PC-3 (cell line): ENCODE measurements at regions of chr17 and their contacts with region 1.

Region 1: GRCh38 chr17:56699186-56699895 is 105.8 kb downstream of the NOG start:
- DNase-seq: peak; percentile 100
- ATAC-seq: peak; percentile 95
- H3K4me3 ChIP-seq: peak overlapping the region; percentile 46; the same call in 1 of the 2 replicates
- H3K27ac ChIP-seq: peak overlapping the region; percentile 90
- H3K4me1 ChIP-seq: peaks cover 23% of the 10 kb centered on the region
- H3K27me3 ChIP-seq: no peaks in the 10 kb centered on the region
- CTCF ChIP-seq: no peak

Region 2: GRCh38 chr17:56558088-56558487 is 141.3 kb before region 1 on chr17:
- CTCF ChIA-PET with region 1: no interaction called
- POLR2A ChIA-PET with region 1: no interaction called
- intact Hi-C with region 1: no loop called
- DNase-seq: no peak
- ATAC-seq: no peak
- H3K4me3 ChIP-seq: no peak overlapping the region
- H3K27ac ChIP-seq: no peak overlapping the region
- H3K4me1 ChIP-seq: no peaks in the 10 kb centered on the region
- H3K27me3 ChIP-seq: peaks cover 48% of the 10 kb centered on the region
- CTCF ChIP-seq: no peak

Region 3: GRCh38 chr17:56653877-56654276 is 45.5 kb before region 1 on chr17:
- CTCF ChIA-PET with region 1: interaction called, 7 read pairs
- POLR2A ChIA-PET with region 1: interaction called, 3 read pairs
- intact Hi-C with region 1: loop called (anchors 1 kb)
- DNase-seq: peak; percentile 91
- ATAC-seq: peak; percentile 87
- H3K4me3 ChIP-seq: no peak overlapping the region
- H3K27ac ChIP-seq: no peak overlapping the region
- H3K4me1 ChIP-seq: peaks cover 14% of the 10 kb centered on the region
- H3K27me3 ChIP-seq: no peaks in the 10 kb centered on the region
- CTCF ChIP-seq: peak; percentile 91

Region 4: DNA sequence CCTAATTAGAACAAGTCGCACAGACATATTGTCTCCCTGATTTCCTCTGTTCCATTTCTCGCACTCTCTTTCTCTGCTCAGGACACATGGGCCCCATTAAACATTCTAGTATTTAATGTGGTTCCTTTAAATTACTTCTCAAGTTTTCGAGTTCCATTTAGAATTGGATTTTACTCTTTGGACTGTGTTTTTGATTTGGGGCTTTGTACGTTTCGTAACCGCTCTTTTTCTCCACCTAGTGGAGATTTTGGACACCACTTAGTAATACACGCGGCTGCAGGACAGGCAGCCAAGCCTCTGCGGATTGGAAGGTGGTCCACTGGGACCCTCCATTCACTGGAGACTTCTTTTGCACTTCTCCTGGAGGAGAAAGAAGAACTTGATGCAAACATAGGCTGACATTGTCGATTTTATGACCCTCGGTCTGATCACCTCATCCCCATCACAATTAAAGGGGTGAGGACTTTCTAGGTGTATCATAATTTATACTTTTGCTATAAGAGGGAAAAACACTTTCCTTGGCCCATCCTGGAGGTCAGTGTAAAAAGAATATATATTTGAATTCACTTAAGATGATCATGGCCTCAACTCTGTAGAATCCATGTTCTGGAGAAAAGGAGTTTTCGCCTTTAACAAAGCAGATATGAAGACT is 20.1 kb before region 1 on chr17:
- CTCF ChIA-PET with region 1: interaction called, 6 read pairs
- POLR2A ChIA-PET with region 1: interaction called, 8 read pairs
- intact Hi-C with region 1: loop called (anchors 1 kb)
- DNase-seq: peak; percentile 68
- ATAC-seq: peak; percentile 45
- H3K4me3 ChIP-seq: peak overlapping the region; percentile 19; the same call in 1 of the 2 replicates
- H3K27ac ChIP-seq: peak overlapping the region; percentile 61
- H3K4me1 ChIP-seq: peaks cover 71% of the 10 kb centered on the region
- H3K27me3 ChIP-seq: no peaks in the 10 kb centered on the region
- CTCF ChIP-seq: peak; percentile 95

Region 5: DNA sequence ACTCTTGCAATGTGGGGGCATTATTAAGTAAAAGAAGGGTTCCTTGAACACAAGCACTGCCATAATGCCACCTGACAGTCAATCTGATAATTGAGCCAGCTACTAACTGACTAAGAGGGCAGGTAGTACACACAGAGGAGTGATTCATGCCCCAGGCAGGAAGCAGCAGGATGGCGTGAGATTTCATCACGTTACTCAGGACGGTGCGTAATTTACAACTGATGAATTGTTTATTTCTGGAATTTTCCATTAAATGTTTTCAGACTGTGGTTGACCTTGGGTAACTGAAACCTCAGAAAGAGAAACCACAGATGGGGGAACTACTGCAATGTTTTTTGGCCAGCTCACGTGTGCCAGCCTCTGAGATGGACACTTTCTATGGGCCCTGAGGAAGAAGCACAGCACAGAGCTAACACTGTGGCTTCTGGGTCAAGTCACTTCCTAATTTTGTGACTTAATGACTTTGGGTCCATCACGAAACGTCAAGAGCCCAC is 87.7 kb after region 1 on chr17:
- CTCF ChIA-PET with region 1: no interaction called
- POLR2A ChIA-PET with region 1: interaction called, 4 read pairs
- intact Hi-C with region 1: loop called (anchors 1 kb)
- DNase-seq: peak; percentile 99
- ATAC-seq: peak; percentile 79
- H3K4me3 ChIP-seq: peak overlapping the region; percentile 4; the same call in 1 of the 2 replicates
- H3K27ac ChIP-seq: peak overlapping the region; percentile 98
- H3K4me1 ChIP-seq: peaks cover 45% of the 10 kb centered on the region
- H3K27me3 ChIP-seq: no peaks in the 10 kb centered on the region
- CTCF ChIP-seq: no peak